Calu3 (cell line): ENCODE measurements at regions of chr2 and their contacts with region 1.

Region 1: DNA sequence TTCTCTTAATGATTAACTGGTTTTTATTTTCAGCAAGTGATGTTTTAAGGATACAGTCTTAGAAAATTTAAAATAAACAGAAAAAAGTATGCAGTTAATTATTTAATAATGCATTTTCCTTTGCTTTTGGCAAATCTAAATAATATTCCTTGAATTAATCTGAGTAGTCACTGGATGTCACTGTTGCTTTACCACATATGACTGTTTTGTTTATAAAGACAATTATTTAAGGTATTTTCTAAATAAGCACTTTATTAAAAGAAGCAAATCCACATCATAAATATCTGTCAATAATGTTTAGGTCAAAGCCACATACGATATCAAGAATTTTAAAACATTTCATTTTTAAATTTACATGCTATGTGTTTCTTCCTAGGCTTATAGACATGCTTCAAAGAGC is 40.6 kb upstream of the TFPI start:
- DNase-seq: no peak
- H3K4me3 Mint-ChIP-seq: no peak overlapping the region
- H3K27ac Mint-ChIP-seq: no peak overlapping the region
- H3K4me1 Mint-ChIP-seq: no peaks in the 10 kb centered on the region
- H3K27me3 Mint-ChIP-seq: no peaks in the 10 kb centered on the region
- CTCF ChIP-seq: no peak

Region 2: GRCh38 chr2:187698374-187699110 is 103.7 kb after region 1 on chr2:
- CTCF ChIA-PET with region 1: no interaction called
- intact Hi-C with region 1: no loop called
- DNase-seq: no peak
- H3K4me3 Mint-ChIP-seq: no peak overlapping the region
- H3K27ac Mint-ChIP-seq: no peak overlapping the region
- H3K4me1 Mint-ChIP-seq: no peaks in the 10 kb centered on the region
- H3K27me3 Mint-ChIP-seq: no peaks in the 10 kb centered on the region
- CTCF ChIP-seq: no peak

Region 3: GRCh38 chr2:188983427-188984064 is 1388.7 kb after region 1 on chr2:
- CTCF ChIA-PET with region 1: no interaction called
- intact Hi-C with region 1: loop called (anchors 10 kb)
- DNase-seq: no peak
- H3K4me3 Mint-ChIP-seq: no peak overlapping the region
- H3K27ac Mint-ChIP-seq: no peak overlapping the region
- H3K4me1 Mint-ChIP-seq: no peaks in the 10 kb centered on the region
- H3K27me3 Mint-ChIP-seq: no peaks in the 10 kb centered on the region
- CTCF ChIP-seq: no peak